CD4-positive, alpha-beta memory T cell (primary cell): ENCODE measurements at regions of chr4 and their contacts with region 1.

Region 1: GRCh38 chr4:151015459-151016347 is 619 bp upstream of the LRBA start:
- DNase-seq: peak; percentile 81 to 90 (median 88)
- H3K4me3 ChIP-seq: peak overlapping the region; percentile 92 to 98
- H3K4me3 Mint-ChIP-seq: peak overlapping the region; percentile 100
- H3K27ac ChIP-seq: peak overlapping the region; percentile 88
- H3K27ac Mint-ChIP-seq: peak overlapping the region; percentile 93 to 99 (median 99)
- H3K4me1 ChIP-seq: peaks cover 40% of the 10 kb centered on the region
- H3K4me1 Mint-ChIP-seq: peaks cover 19 to 44% (median 26%) of the 10 kb centered on the region in 4 donors
- H3K27me3 ChIP-seq: no peaks in the 10 kb centered on the region
- H3K27me3 Mint-ChIP-seq: no peaks in the 10 kb centered on the region

Region 2: DNA sequence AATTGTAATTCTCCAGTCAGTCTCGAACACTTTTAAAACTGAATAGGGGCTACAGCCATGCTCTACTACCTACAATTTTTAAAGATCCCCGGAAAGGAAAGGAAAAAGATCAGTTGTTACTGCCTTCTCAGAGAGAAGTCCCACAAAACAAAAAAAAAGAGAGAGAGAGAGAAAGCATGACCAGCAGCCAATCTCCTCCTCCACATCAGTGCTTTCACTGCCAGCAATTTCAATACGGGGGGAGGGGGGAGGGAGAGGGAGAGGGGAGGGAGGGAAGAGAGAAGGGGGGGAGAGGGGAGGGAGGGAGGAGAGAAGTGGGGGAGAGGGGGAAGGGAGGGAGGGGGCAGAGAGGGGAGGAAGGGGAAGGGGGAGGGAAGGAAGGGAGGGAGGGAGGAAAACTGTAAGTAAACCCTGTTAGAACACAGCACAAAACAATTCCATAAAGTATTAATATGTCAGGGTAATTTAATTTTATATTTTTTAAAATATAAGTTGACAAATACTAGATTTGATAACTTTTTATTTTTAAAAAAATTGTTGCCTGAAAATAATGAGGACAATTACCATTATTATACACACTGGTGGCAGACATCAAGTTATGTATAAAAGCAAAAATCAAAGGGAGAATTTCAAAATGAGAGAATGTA is 108.6 kb before region 1 on chr4:
- CTCF ChIA-PET with region 1: no interaction called
- POLR2A ChIA-PET with region 1: no interaction called
- intact Hi-C with region 1: loop called (anchors 10 kb)
- DNase-seq: no peak
- H3K4me3 ChIP-seq: no peak overlapping the region
- H3K4me3 Mint-ChIP-seq: no peak overlapping the region
- H3K27ac ChIP-seq: no peak overlapping the region
- H3K27ac Mint-ChIP-seq: peak overlapping the region in 1 of 7 donors; percentile 30
- H3K4me1 ChIP-seq: peaks cover 11% of the 10 kb centered on the region
- H3K4me1 Mint-ChIP-seq: peaks cover 23 to 33% (median 27%) of the 10 kb centered on the region in 4 donors
- H3K27me3 ChIP-seq: no peaks in the 10 kb centered on the region
- H3K27me3 Mint-ChIP-seq: no peaks in the 10 kb centered on the region

Region 3: GRCh38 chr4:150960818-150961217 is 54.9 kb before region 1 on chr4:
- CTCF ChIA-PET with region 1: interaction called, 4 read pairs
- POLR2A ChIA-PET with region 1: no interaction called
- intact Hi-C with region 1: loop called (anchors 5 kb)
- DNase-seq: peak in 2 of 5 donors; percentile 7 to 8
- H3K4me3 ChIP-seq: no peak overlapping the region
- H3K4me3 Mint-ChIP-seq: no peak overlapping the region
- H3K27ac ChIP-seq: no peak overlapping the region
- H3K27ac Mint-ChIP-seq: no peak overlapping the region
- H3K4me1 ChIP-seq: peaks cover 4% of the 10 kb centered on the region
- H3K4me1 Mint-ChIP-seq: peaks cover 26 to 47% (median 31%) of the 10 kb centered on the region in 4 donors
- H3K27me3 ChIP-seq: no peaks in the 10 kb centered on the region
- H3K27me3 Mint-ChIP-seq: no peaks in the 10 kb centered on the region

Region 4: GRCh38 chr4:151099229-151099975 is 83.7 kb after region 1 on chr4 and contains the start of gene RPS3A:
- CTCF ChIA-PET with region 1: interaction called, 4 read pairs
- POLR2A ChIA-PET with region 1: interaction called, 59 read pairs
- intact Hi-C with region 1: loop called (anchors 1 kb)
- DNase-seq: peak; percentile 99 to 100 (median 99)
- H3K4me3 ChIP-seq: peak within 1 kb of the TSS; percentile 79 to 82
- H3K4me3 Mint-ChIP-seq: peak within 1 kb of the TSS; percentile 91 to 99 (median 96)
- H3K27ac ChIP-seq: peak within 1 kb of the TSS; percentile 86
- H3K27ac Mint-ChIP-seq: peak within 1 kb of the TSS; percentile 95 to 99 (median 98)
- H3K4me1 ChIP-seq: peaks cover 32% of the 10 kb centered on the region
- H3K4me1 Mint-ChIP-seq: peaks cover 19 to 41% (median 27%) of the 10 kb centered on the region in 4 donors
- H3K27me3 ChIP-seq: no peaks in the 10 kb centered on the region
- H3K27me3 Mint-ChIP-seq: peaks cover 0 to 3% of the 10 kb centered on the region in 2 donors
- total RNA-seq, gene RPS3A: 4,011 to 4,334 TPM

Region 5: GRCh38 chr4:151147000-151147399 is 131.3 kb after region 1 on chr4:
- CTCF ChIA-PET with region 1: no interaction called
- POLR2A ChIA-PET with region 1: no interaction called
- intact Hi-C with region 1: no loop called
- DNase-seq: no peak
- H3K4me3 ChIP-seq: no peak overlapping the region
- H3K4me3 Mint-ChIP-seq: no peak overlapping the region
- H3K27ac ChIP-seq: no peak overlapping the region
- H3K27ac Mint-ChIP-seq: no peak overlapping the region
- H3K4me1 ChIP-seq: no peaks in the 10 kb centered on the region
- H3K4me1 Mint-ChIP-seq: peaks cover 0 to 5% (median 2%) of the 10 kb centered on the region in 4 donors
- H3K27me3 ChIP-seq: no peaks in the 10 kb centered on the region
- H3K27me3 Mint-ChIP-seq: peaks cover 1 to 5% of the 10 kb centered on the region in 2 donors